Left lung (tissue), 14 donors: ENCODE measurements at regions of chr14 and their contacts with region 1.

Region 1: DNA sequence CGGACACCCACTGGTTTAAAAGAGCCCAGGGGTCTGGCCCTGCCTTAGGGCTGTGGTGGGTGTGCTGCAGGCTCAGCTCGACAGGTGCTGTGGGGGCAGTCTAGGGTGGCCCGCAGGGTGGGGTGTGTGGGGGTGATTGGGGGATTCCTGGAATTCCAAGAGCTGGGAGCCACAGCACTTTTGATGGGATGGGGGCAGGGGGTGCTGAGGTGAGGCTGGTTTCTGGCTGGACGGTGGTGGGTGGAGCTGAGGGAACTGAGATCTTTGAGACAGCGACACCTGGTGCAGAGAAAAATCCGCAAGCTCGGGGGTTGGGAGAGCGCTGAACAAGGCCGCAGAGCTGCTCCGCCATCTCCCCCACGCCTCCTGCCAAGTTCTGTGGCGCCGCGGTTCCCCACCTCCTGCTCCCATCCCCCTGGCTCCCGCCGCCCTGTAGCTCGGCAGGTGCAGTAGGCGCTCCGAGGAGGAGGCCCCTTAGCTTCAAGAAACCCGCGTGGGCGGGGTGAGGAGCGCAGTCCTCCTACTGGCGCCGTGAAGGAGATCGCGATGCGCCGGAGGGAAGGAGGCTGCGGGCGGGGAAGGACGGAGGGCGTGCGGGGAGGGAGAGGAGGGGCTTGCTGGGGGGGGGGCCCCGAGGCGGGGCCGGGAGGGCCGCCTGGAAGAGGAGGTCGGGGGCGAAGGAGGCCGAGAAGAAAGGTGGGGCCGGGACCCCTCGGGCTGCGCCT is 1.3 kb upstream of the TEDC1 start:
- DNase-seq: peak; percentile 86 to 92 (median 90)
- ATAC-seq: peak; percentile 32
- H3K4me3 ChIP-seq: peak overlapping the region; percentile 60 to 81
- H3K27ac ChIP-seq: peak overlapping the region; percentile 95 to 97
- H3K4me1 ChIP-seq: peaks cover 25 to 68% of the 10 kb centered on the region in 2 donors
- H3K27me3 ChIP-seq: peaks cover 0 to 39% of the 10 kb centered on the region in 2 donors
- CTCF ChIP-seq: peak; percentile 42 to 53

Region 2: DNA sequence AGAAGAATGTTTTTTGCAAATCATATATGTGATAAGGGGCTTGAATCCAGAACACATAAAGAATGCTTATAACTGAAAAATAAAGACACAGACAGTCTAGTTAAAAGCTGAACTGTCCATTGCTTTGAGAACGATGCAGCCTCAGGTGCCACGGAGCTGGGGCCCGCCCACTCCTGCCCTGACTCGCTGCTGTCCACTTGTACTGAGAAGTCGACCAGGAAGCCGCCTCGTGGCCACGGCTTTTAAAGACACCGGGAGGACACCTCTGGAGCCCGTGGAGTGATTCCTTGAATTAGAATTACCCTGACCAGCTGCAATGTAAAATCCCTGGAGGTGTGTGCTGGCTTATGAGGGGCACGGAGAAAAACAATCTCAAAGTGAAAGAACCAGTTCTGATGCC is 115.3 kb before region 1 on chr14:
- intact Hi-C with region 1: loop called in 1 of 2 experiments (anchors 5 kb)
- DNase-seq: peak in 1 of 4 donors; percentile 79
- ATAC-seq: peak; percentile 56
- H3K4me3 ChIP-seq: no peak overlapping the region
- H3K27ac ChIP-seq: no peak overlapping the region
- H3K4me1 ChIP-seq: peaks cover 0 to 14% of the 10 kb centered on the region in 2 donors
- H3K27me3 ChIP-seq: no peaks in the 10 kb centered on the region
- CTCF ChIP-seq: no peak

Region 3: GRCh38 chr14:105577314-105577861 is 87.7 kb after region 1 on chr14:
- intact Hi-C with region 1: no loop called
- DNase-seq: peak in 1 of 4 donors; percentile 63
- ATAC-seq: no peak
- H3K4me3 ChIP-seq: no peak overlapping the region
- H3K27ac ChIP-seq: no peak overlapping the region
- H3K4me1 ChIP-seq: no peaks in the 10 kb centered on the region
- H3K27me3 ChIP-seq: no peaks in the 10 kb centered on the region
- CTCF ChIP-seq: no peak